HEK293T (cell line): ENCODE measurements at regions of chr6 and their contacts with region 1.

Region 1: GRCh38 chr6:39114704-39115599 is at the start of gene SAYSD1:
- DNase-seq: peak; percentile 96

Region 2: GRCh38 chr6:39128106-39128505 is 13.2 kb after region 1 on chr6:
- CTCF ChIA-PET with region 1: no interaction called
- POLR2A ChIA-PET with region 1: interaction called, 14 read pairs
- DNase-seq: no peak